Mammary epithelial cell (primary cell): ENCODE measurements at regions of chr20 and their contacts with region 1.

Region 1: GRCh38 chr20:22523499-22524392 is 60.6 kb downstream of the FOXA2 start:
- DNase-seq: no peak
- H3K4me3 ChIP-seq: no peak overlapping the region
- H3K27ac ChIP-seq: no peak overlapping the region
- H3K4me1 ChIP-seq: no peaks in the 10 kb centered on the region
- H3K27me3 ChIP-seq: no peaks in the 10 kb centered on the region
- CTCF ChIP-seq: no peak

Region 2: DNA sequence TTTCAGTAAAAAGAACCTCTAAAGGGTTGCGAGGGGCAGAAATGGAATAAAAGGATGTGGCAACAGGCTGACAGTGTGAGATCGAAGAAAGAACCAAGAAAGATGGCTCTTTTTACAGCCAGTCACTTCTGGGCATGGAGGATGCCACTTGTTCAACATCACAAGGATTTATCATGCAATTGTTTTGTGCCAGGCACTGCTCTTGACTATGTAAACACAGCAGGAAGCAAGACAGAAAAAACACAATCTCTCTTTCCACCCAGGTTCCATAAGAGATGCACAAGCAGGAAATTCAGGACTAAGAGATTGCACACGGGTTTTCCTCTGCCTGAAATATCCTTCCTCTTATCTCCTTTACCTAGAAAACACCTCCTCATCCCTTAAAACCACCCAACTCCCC is 22.6 kb after region 1 on chr20:
- CTCF ChIA-PET with region 1: no interaction called
- dilution Hi-C with region 1: no loop called
- in situ Hi-C with region 1: no loop called
- intact Hi-C with region 1: no loop called
- DNase-seq: no peak
- H3K4me3 ChIP-seq: no peak overlapping the region
- H3K27ac ChIP-seq: no peak overlapping the region
- H3K4me1 ChIP-seq: no peaks in the 10 kb centered on the region
- H3K27me3 ChIP-seq: peaks cover 3% of the 10 kb centered on the region
- CTCF ChIP-seq: no peak

Region 3: GRCh38 chr20:22931653-22932608 is 408.2 kb after region 1 on chr20:
- CTCF ChIA-PET with region 1: interaction called, 25 read pairs
- dilution Hi-C with region 1: no loop called
- in situ Hi-C with region 1: no loop called
- intact Hi-C with region 1: no loop called
- DNase-seq: no peak
- H3K4me3 ChIP-seq: no peak overlapping the region
- H3K27ac ChIP-seq: no peak overlapping the region
- H3K4me1 ChIP-seq: no peaks in the 10 kb centered on the region
- H3K27me3 ChIP-seq: no peaks in the 10 kb centered on the region
- CTCF ChIP-seq: no peak

Region 4: DNA sequence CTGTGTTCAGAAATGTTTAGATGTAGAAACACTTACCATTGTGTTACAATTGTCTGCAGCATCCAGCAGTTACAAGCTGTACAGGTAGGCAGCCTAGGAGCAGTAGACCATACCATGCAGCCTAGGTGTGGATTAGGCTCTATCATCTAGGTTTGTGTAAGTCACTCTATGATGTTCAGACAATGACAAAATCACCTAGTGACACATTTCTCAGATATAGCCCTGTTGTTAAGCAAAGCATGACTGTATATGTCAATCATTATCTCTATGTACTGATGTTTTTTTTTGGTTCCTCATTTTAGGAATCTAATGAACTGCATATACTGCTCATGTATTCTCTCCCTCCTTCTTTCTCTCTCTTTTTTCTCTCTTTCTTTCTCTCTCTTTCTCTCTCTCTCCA is 989.4 kb after region 1 on chr20:
- CTCF ChIA-PET with region 1: no interaction called
- dilution Hi-C with region 1: no loop called
- in situ Hi-C with region 1: no loop called
- intact Hi-C with region 1: no loop called
- DNase-seq: no peak
- H3K4me3 ChIP-seq: no peak overlapping the region
- H3K27ac ChIP-seq: no peak overlapping the region
- H3K4me1 ChIP-seq: no peaks in the 10 kb centered on the region
- H3K27me3 ChIP-seq: no peaks in the 10 kb centered on the region
- CTCF ChIP-seq: no peak